K562 (cell line): ENCODE measurements at regions of chr6 and their contacts with region 1.

Region 1: GRCh38 chr6:68975064-68975463 is 340.0 kb downstream of the ADGRB3 start:
- DNase-seq: peak in 2 of 4 experiments; percentile 13 to 37
- ATAC-seq: peak; percentile 84
- H3K4me3 ChIP-seq: no peak overlapping the region
- H3K27ac ChIP-seq: no peak overlapping the region
- H3K4me1 ChIP-seq: no peaks in the 10 kb centered on the region
- H3K27me3 ChIP-seq: no peaks in the 10 kb centered on the region
- CTCF ChIP-seq: peak; percentile 22 to 59 (median 49); a peak in 5 of 6 replicates
- EP300 ChIP-seq: no peak
- POLR2A ChIP-seq: no peak
- RAD21 ChIP-seq: peak in 1 of 2 experiments; percentile 20; a peak in 1 of 4 replicates

Region 2: DNA sequence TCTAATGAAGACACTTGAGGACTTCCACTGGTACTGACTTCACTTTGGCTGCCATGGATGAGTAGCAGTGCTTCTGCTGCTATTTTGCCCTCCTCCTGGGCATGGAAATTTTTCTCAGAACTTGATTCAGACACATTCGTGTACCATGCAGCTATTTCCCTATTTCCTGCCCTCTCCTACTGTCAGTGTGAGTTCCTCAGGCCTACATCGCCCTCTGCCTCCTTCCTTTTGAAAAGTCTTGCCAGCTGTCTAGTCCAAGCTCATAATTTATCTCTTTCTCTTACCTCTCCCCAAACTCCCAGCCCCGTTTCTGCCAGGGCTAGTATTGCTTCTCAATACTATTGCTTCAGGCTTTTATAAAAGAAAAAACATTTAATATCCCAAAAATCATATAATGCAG is 130.2 kb after region 1 on chr6:
- CTCF ChIA-PET with region 1: no interaction called
- POLR2A ChIA-PET with region 1: no interaction called
- in situ Hi-C with region 1: no loop called
- intact Hi-C with region 1: loop called (anchors 10 kb)
- DNase-seq: no peak
- ATAC-seq: no peak
- H3K4me3 ChIP-seq: no peak overlapping the region
- H3K27ac ChIP-seq: no peak overlapping the region
- H3K4me1 ChIP-seq: no peaks in the 10 kb centered on the region
- H3K27me3 ChIP-seq: no peaks in the 10 kb centered on the region
- CTCF ChIP-seq: peak in 1 of 3 experiments; percentile 18; a peak in 1 of 6 replicates
- EP300 ChIP-seq: no peak
- POLR2A ChIP-seq: no peak
- RAD21 ChIP-seq: no peak

Region 3: GRCh38 chr6:69466979-69467570 is 492.0 kb after region 1 on chr6:
- CTCF ChIA-PET with region 1: no interaction called
- POLR2A ChIA-PET with region 1: no interaction called
- in situ Hi-C with region 1: no loop called
- intact Hi-C with region 1: loop called (anchors 10 kb)
- DNase-seq: no peak
- ATAC-seq: no peak
- H3K4me3 ChIP-seq: no peak overlapping the region
- H3K27ac ChIP-seq: no peak overlapping the region
- H3K4me1 ChIP-seq: no peaks in the 10 kb centered on the region; a peak in 1 of 5 replicates
- H3K27me3 ChIP-seq: no peaks in the 10 kb centered on the region
- CTCF ChIP-seq: no peak
- EP300 ChIP-seq: no peak
- POLR2A ChIP-seq: no peak
- RAD21 ChIP-seq: no peak